H1 (cell line): ENCODE measurements at regions of chr5 and their contacts with region 1.

Region 1: DNA sequence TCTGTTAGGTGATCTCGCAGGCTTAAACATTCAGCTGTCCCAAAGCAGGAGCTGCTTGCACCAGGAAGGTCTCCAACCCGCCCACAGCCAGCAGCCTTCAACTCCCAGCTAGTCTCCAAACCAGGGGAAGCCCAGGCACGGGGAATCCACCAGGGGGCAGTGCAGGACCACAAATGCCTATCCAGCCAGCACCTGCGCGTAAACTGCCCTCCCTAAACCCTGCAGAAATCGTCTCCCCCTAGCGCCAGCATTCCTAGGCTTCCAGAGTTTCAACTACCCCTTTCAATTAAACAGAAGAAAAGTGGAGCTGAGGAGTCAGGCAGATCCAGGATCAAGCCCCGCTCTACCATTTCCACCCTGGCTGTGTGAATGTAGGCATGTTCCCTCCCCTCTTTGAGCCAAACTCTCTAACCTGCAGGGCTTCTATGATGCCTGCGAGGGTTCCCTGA is 72.0 kb downstream of the HRH2 start:
- DNase-seq: peak; percentile 97 to 100
- H3K4me3 ChIP-seq: peak overlapping the region; percentile 27 to 57 (median 44); a peak in 7 of 8 replicates
- H3K27ac ChIP-seq: no peak overlapping the region
- H3K4me1 ChIP-seq: peaks cover 0 to 13% (median 7%) of the 10 kb centered on the region in 4 experiments; a peak in 6 of 7 replicates
- H3K27me3 ChIP-seq: no peaks in the 10 kb centered on the region; a peak in 2 of 7 replicates
- CTCF ChIP-seq: peak in 2 of 3 experiments; percentile 99 to 100; a peak in 3 of 4 replicates
- EP300 ChIP-seq: peak in 1 of 2 experiments; percentile 66; a peak in 1 of 3 replicates
- POLR2A ChIP-seq: no peak
- RAD21 ChIP-seq: peak; percentile 100

Region 2: DNA sequence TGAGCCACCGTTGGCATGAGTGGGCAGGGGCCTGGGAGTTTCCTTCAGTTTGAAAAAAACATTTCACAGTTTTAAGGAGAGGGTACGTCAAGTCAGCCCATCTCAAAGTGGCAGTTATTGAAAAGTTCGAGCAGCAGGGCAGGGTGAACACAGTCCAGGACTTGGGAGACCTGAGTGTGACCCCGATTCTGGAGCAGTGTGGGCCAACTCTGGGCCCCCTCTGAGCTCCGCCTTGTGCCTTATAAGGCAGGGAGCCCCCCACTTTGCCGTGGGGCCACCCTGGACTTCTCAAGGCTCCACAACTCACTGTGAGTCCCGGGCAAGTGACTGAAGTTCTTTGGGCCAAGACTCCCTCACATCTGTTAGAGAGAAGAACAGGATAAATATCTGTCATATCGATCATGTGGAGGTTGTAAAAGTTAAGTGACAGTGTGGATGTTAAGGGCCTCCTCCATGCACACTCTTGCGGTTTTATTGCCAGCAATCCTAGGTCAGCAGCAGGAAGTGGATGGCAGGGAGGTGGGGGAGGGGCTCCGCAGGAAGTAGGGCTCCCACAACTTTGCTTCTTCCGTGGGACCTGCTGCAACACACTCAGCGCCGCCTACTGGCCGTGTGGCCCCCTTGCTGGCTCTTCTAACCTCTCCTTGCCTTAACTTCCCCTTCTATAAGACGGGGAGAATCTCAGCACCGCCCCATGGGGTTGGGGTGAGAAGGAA is 33.6 kb before region 1 on chr5:
- CTCF ChIA-PET with region 1: interaction called, 18 read pairs
- POLR2A ChIA-PET with region 1: interaction called, 3 read pairs
- DNase-seq: peak; percentile 68 to 84
- H3K4me3 ChIP-seq: no peak overlapping the region
- H3K27ac ChIP-seq: 0 out of 2 replicates have a peak overlapping the region, but pooled peaks have one; percentile 0
- H3K4me1 ChIP-seq: peaks cover 0 to 10% (median 4%) of the 10 kb centered on the region in 4 experiments; a peak in 5 of 7 replicates
- H3K27me3 ChIP-seq: no peaks in the 10 kb centered on the region; a peak in 1 of 7 replicates
- CTCF ChIP-seq: peak in 2 of 3 experiments; percentile 91 to 96; a peak in 3 of 4 replicates
- EP300 ChIP-seq: peak in 1 of 2 experiments; percentile 67; a peak in 1 of 3 replicates
- POLR2A ChIP-seq: no peak
- RAD21 ChIP-seq: peak; percentile 76 to 85

Region 3: DNA sequence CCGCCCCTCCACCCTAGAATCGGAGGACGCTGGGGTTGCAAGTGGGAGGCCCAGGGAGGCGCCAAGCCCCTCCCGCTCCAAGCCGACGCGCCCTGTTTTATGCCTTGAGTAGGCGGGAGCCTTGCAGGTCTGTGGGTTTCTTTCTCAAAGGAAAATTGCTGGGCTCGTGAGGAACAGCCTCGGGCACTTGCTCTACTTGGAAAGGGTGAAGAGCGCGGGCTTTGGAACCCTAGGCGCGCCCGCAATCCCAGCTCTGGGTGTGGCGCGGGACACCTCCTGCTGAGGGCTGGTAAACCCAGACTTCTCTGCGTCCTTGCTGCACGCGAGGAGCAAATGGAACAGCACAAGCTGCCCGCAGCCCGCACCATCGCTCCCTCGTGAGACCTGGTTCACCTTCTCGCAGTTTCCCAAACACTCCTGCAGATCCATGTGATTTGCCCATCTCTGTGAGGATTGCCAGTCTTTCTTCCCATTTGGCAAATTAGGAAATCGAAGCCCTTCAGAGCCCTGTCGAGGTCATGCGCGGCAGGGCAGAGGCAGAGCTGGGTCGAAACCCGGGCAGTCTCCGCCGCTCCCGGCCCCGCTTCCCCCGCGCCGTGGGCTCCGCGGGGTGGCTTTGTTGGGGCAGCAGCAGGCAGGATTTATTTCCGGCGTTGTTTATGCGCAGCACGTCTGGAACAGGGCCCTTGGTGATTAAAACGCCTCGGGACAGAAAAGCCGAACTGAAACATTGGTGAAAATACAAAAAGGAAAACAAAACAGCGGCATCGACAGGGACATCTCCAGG is 43.1 kb after region 1 on chr5:
- CTCF ChIA-PET with region 1: interaction called, 36 read pairs
- POLR2A ChIA-PET with region 1: no interaction called
- DNase-seq: peak in 1 of 2 experiments; percentile 62
- H3K4me3 ChIP-seq: peak overlapping the region; percentile 19 to 58 (median 32); a peak in 7 of 8 replicates
- H3K27ac ChIP-seq: no peak overlapping the region
- H3K4me1 ChIP-seq: peaks cover 0 to 5% (median 0%) of the 10 kb centered on the region in 4 experiments; a peak in 3 of 7 replicates
- H3K27me3 ChIP-seq: peaks cover 1 to 19% (median 15%) of the 10 kb centered on the region in 4 experiments
- CTCF ChIP-seq: no peak
- EP300 ChIP-seq: no peak
- POLR2A ChIP-seq: no peak
- RAD21 ChIP-seq: no peak

Region 4: DNA sequence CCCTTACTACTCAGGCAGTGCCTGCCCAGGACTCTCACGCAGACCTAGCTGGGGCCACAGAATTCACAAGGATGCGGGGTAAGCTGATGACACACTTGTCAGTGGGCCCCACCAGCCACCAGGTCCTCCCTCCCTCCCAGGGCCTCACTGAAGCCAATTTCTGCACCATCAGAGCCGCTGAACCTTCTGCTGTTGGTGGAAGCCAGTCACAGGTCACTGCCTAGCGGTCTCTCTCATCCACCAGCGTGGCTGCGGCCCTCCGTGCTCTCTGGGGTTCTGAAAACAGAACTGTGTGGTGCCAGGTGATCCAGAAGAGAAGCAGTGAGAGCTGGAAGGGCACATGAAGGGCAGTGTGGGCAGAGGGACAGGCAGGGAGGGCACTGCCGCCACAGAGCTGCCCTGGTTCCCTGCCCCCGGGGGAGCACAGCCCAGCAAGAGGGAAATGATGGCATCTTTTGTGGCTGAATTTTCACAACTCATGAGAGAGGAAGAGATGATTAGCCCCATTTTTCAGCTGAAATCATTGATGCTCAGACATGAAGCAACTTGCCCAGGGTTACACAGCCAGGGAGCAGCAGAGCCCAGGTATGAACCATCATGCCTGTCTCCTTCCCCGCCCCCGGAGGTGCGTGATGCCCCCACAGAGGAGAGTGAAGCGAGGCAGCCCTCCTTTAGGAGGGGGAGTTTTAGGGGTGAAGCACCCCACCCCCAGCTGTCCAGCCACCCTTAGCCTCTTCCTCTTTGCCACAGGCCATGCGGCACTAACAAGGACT is 100.1 kb after region 1 on chr5:
- CTCF ChIA-PET with region 1: interaction called, 11 read pairs
- POLR2A ChIA-PET with region 1: no interaction called
- DNase-seq: no peak
- H3K4me3 ChIP-seq: no peak overlapping the region
- H3K27ac ChIP-seq: no peak overlapping the region
- H3K4me1 ChIP-seq: peaks cover 0 to 8% (median 3%) of the 10 kb centered on the region in 4 experiments; a peak in 3 of 7 replicates
- H3K27me3 ChIP-seq: no peaks in the 10 kb centered on the region
- CTCF ChIP-seq: no peak
- EP300 ChIP-seq: no peak
- POLR2A ChIP-seq: no peak
- RAD21 ChIP-seq: no peak

Region 5: DNA sequence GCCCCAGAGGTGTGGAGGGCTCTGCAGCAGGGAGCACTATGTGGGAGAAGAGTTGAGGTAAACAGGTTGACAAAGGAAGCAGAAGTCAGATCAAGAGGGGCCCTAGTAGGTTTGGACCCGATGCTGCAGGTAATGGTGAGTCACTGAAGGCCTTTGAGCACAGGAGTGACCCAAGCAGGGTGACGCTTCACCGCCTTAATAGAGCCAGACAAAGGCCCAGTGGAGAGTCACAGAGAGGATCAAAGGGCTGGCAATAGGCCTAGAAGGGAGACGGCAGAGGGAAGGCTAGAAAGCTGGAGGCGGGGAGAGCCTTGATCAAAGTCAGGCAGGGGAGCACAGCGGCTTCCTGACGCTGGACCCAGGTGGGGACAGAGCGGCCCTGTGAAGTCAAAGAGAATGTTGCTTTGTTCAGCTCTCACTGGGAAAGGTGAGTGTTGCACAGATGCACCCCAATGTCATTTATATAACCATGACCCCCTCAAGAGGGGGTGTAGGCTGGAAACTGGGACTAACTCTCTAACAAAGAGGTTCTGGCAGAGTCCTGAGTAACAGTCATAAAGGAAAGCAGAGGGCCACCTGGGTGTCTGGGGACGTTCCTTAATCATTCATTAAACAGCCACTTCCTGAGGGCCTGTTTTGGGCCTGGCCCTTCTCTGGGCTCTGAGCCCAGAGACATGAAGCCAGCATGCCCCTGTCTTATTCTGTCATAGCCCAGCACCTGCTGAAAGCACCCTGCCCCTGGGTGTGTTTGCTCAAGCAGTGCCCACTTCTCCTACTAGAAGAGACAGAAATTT is 131.7 kb after region 1 on chr5:
- CTCF ChIA-PET with region 1: interaction called, 30 read pairs
- POLR2A ChIA-PET with region 1: interaction called, 3 read pairs
- DNase-seq: no peak
- H3K4me3 ChIP-seq: no peak overlapping the region
- H3K27ac ChIP-seq: no peak overlapping the region
- H3K4me1 ChIP-seq: peaks cover 0 to 7% (median 3%) of the 10 kb centered on the region in 4 experiments; a peak in 2 of 7 replicates
- H3K27me3 ChIP-seq: no peaks in the 10 kb centered on the region; a peak in 1 of 7 replicates
- CTCF ChIP-seq: no peak
- EP300 ChIP-seq: no peak
- POLR2A ChIP-seq: no peak
- RAD21 ChIP-seq: no peak

Region 6: GRCh38 chr5:175889910-175890684 is 160.2 kb after region 1 on chr5:
- CTCF ChIA-PET with region 1: interaction called, 37 read pairs
- POLR2A ChIA-PET with region 1: no interaction called
- DNase-seq: no peak
- H3K4me3 ChIP-seq: no peak overlapping the region
- H3K27ac ChIP-seq: no peak overlapping the region
- H3K4me1 ChIP-seq: peaks cover 0 to 6% (median 3%) of the 10 kb centered on the region in 4 experiments; a peak in 5 of 7 replicates
- H3K27me3 ChIP-seq: no peaks in the 10 kb centered on the region
- CTCF ChIP-seq: no peak
- EP300 ChIP-seq: no peak
- POLR2A ChIP-seq: no peak
- RAD21 ChIP-seq: no peak